Prostate gland (tissue), 2 donors: ENCODE measurements at regions of chr1 and their contacts with region 1.

Region 1: GRCh38 chr1:204162231-204163074 is 3.7 kb downstream of the REN start:
- DNase-seq: peak; percentile 90
- H3K4me3 ChIP-seq: no peak overlapping the region
- H3K27ac ChIP-seq: no peak overlapping the region
- H3K4me1 ChIP-seq: no peaks in the 10 kb centered on the region
- H3K27me3 ChIP-seq: no peaks in the 10 kb centered on the region
- CTCF ChIP-seq: peak; percentile 96 to 100 (median 99)
- POLR2A ChIP-seq: no peak

Region 2: GRCh38 chr1:204207136-204207616 is 44.7 kb after region 1 on chr1:
- intact Hi-C with region 1: loop called (anchors 5 kb)
- DNase-seq: peak; percentile 65
- H3K4me3 ChIP-seq: no peak overlapping the region
- H3K27ac ChIP-seq: no peak overlapping the region
- H3K4me1 ChIP-seq: no peaks in the 10 kb centered on the region
- H3K27me3 ChIP-seq: no peaks in the 10 kb centered on the region
- CTCF ChIP-seq: peak; percentile 75 to 88 (median 81)
- POLR2A ChIP-seq: no peak

Region 3: DNA sequence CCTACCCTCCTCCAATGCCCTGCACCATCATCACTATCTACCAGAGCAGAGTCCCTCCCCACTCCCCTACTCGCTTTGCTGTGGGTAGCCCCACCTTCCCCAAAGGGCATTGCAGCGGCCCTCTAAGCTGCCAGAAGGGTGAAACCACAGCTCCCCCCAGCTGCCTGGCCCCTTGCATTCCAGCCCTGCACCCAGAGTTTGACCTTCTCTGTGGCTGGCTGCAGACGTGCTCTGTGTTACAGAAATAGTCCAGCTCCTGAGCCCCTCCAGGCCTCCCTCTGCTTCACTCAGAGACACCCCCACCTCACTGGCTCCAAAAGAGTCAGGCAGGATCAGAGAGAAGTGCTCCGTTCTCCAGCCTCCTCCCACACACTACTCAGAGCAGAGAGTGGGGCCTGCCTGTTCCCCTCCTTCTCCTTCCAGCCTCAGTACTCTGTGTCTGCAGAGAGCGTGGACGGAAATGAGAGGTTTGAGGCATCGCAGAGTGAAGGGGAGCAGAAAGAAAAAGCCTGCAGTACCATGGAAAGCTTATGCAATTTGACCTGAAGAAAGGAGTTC is 134.1 kb after region 1 on chr1:
- intact Hi-C with region 1: no loop called
- DNase-seq: no peak
- H3K4me3 ChIP-seq: no peak overlapping the region
- H3K27ac ChIP-seq: no peak overlapping the region
- H3K4me1 ChIP-seq: peaks cover 1% of the 10 kb centered on the region
- H3K27me3 ChIP-seq: no peaks in the 10 kb centered on the region
- CTCF ChIP-seq: no peak
- POLR2A ChIP-seq: no peak